Right cardiac atrium (tissue), 5 donors: ENCODE measurements at regions of chr5 and their contacts with region 1.

Region 1: GRCh38 chr5:717143-717542 is 24.0 kb upstream of the TPPP start:
- DNase-seq: no peak
- ATAC-seq: peak in 1 of 2 donors; percentile 7
- H3K4me3 ChIP-seq: no peak overlapping the region
- H3K27ac ChIP-seq: no peak overlapping the region
- H3K4me1 ChIP-seq: no peaks in the 10 kb centered on the region
- H3K27me3 ChIP-seq: no peaks in the 10 kb centered on the region

Region 2: GRCh38 chr5:801472-801871 is 84.3 kb after region 1 on chr5:
- intact Hi-C with region 1: loop called in 1 of 4 experiments (anchors 5 kb)
- DNase-seq: peak in 1 of 3 donors; percentile 60
- ATAC-seq: peak; percentile 33 to 73
- H3K4me3 ChIP-seq: no peak overlapping the region
- H3K27ac ChIP-seq: no peak overlapping the region
- H3K4me1 ChIP-seq: no peaks in the 10 kb centered on the region
- H3K27me3 ChIP-seq: no peaks in the 10 kb centered on the region